Adrenal gland (tissue), 19 donors: ENCODE measurements at regions of chr18 and their contacts with region 1.

Region 1: DNA sequence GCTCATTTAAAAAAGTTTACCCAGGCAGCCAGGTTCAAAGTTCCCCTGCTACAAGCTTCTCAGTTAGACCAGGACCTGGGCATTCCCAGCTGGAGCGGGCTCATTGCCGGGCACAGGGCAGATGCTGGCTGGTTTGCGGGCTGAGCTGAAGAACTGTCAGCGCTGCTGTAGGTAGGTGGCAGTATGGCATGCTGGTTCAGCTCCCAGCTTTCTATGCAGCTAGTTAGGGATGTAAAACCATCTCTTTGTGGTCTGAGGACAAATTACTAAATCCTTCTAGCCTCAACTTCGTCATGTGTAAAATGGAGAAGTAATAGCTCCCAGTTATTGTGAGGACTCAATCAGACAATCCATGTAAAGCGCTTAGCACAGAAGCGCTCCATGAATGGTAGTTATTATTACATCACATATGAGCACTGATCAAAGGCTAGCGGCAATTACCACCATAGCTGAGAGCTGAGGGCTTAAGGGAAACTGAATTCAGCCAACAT is 2.4 kb upstream of the LDLRAD4 start:
- DNase-seq: peak; percentile 73 to 90 (median 82)
- H3K4me3 ChIP-seq: peak overlapping the region in 1 of 4 donors; percentile 91
- H3K27ac ChIP-seq: peak overlapping the region in 3 of 5 donors; percentile 29 to 93 (median 90)
- H3K4me1 ChIP-seq: peaks cover 18 to 33% of the 10 kb centered on the region in 2 donors
- H3K27me3 ChIP-seq: peaks cover 3% of the 10 kb centered on the region
- CTCF ChIP-seq: peak; percentile 53 to 84 (median 80)
- POLR2A ChIP-seq: no peak

Region 2: DNA sequence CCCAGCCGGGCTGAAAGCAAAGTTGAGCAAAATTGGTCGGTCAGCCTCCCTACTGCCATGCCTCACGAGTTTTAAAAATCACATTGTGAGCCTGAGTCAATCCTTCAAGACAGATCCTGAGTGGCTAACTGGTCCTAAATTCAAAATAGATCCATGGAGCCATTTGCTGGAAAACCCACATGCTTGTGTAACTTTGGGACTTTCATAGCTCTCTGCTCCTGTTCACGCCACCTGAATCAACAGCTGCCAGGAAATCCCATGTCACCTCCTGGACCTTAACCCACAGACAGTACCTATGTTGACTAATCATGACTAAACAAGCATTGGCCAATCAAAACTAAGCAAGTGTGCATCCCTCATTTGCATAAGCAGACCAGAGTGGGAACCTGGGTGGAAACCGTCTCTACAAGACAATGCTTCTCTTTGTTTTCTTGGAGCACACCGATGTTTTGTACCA is 40.4 kb before region 1 on chr18:
- intact Hi-C with region 1: no loop called
- DNase-seq: no peak
- H3K4me3 ChIP-seq: no peak overlapping the region
- H3K27ac ChIP-seq: no peak overlapping the region
- H3K4me1 ChIP-seq: no peaks in the 10 kb centered on the region
- H3K27me3 ChIP-seq: no peaks in the 10 kb centered on the region
- CTCF ChIP-seq: no peak
- POLR2A ChIP-seq: no peak

Region 3: DNA sequence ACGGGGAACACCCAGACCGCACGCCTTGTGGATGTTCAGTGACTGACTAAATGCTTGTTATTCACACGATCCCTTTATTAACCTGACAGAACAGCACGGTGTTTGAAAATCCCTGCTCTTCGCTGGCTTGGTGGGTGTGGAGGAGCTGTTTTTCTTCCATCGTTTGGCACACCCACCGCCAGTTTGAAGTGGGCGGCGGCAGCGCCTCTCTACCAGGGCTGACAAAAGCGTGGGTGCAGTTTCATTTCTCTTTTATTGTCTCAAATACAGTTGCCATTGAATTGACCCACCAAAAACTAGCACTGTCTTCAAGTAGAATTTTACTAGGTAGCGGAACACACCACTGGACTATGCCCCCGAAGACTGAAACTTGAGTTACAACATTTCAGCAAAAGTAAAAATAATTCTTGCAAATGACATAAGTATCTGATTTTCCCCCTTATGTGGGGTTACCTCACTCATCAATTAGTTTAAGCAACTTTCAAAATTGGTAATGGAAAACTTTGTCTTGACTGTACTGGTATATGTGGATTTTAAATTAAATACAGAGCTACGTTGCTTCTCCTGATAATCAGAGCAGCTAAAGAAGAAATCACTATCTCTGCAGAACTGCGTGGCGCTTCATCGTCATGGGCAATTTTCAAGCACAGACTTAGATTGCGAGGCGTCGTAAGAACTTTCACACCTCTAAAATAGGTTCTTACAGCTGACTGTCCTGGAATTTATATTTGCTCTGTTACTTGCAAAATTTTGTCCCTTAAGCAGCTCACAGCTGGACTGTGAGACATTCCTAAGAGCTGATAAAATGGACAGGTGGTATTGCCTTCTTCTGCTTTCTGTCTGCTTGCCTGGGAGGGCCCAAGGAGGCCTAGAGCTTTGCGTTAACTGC is 63.3 kb after region 1 on chr18:
- intact Hi-C with region 1: no loop called
- DNase-seq: no peak
- H3K4me3 ChIP-seq: no peak overlapping the region
- H3K27ac ChIP-seq: no peak overlapping the region
- H3K4me1 ChIP-seq: peaks cover 3 to 18% of the 10 kb centered on the region in 2 donors
- H3K27me3 ChIP-seq: no peaks in the 10 kb centered on the region
- CTCF ChIP-seq: no peak
- POLR2A ChIP-seq: no peak

Region 4: GRCh38 chr18:13394801-13395200 is 178.7 kb after region 1 on chr18:
- intact Hi-C with region 1: no loop called
- DNase-seq: no peak
- H3K4me3 ChIP-seq: no peak overlapping the region
- H3K27ac ChIP-seq: no peak overlapping the region
- H3K4me1 ChIP-seq: no peaks in the 10 kb centered on the region
- H3K27me3 ChIP-seq: no peaks in the 10 kb centered on the region
- CTCF ChIP-seq: no peak
- POLR2A ChIP-seq: no peak

Region 5: DNA sequence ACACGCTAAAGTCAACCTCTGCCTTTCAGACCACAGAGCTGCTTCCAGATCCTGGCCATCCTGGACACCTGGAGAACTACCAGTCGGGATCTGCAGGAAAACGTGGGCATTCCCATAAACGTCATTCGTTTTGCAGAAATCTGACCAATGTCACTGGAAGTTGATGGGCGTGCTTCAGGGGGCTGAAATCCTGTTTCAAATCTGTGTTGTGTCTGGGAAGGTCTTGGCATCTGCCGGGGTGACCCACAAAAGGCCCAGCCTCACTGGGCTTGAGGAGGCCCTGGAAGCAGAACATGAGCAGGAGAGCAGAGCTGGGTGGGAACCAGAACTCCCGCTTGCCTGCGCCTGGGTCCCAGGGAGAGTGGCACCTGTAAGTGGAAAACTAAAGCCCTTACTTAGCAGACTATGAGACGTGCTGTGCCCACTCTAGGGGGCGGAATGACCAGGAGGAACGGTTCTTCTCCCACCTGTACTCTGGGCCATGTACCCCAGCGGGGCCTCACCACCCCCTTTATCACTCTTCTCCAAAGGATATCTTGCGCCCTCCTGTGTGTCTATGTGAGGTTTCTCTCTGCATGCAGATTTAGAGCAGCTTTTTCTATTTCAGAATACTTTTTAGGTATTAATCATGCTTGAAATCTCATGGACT is 309.4 kb after region 1 on chr18:
- intact Hi-C with region 1: loop called in 1 of 2 experiments (anchors 5 kb)
- DNase-seq: peak in 1 of 7 donors; percentile 12
- H3K4me3 ChIP-seq: no peak overlapping the region
- H3K27ac ChIP-seq: no peak overlapping the region
- H3K4me1 ChIP-seq: peaks cover 0 to 11% of the 10 kb centered on the region in 2 donors
- H3K27me3 ChIP-seq: no peaks in the 10 kb centered on the region
- CTCF ChIP-seq: no peak
- POLR2A ChIP-seq: no peak